ENCODE measurements at regions of chr12 and their contacts with region 1.

Region 1: DNA sequence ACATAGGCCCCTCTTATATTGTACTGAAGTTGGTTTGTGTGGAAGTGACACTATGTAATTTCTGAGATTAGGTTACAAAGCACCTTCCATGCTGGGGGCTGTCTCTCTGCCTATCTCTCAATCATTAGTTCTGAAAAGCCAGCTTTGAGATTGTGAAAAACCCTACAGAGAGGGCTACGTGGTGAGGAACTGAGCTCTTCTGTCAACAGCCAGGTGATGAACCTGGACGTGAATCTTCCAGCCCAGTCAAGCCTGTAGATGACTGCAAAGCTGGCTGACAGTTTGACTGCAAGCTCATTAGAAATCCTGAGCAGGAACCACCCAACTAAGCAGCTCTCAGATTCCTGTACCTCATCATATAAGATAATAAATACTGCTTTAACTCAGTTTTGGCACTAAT is 36.3 kb upstream of the BBS10 start:
- DNase-seq: no peak
- ATAC-seq: no peak
- H3K4me3 ChIP-seq: no peak overlapping the region
- H3K27ac ChIP-seq: no peak overlapping the region
- H3K4me1 ChIP-seq: no peaks in the 10 kb centered on the region
- H3K27me3 ChIP-seq: no peaks in the 10 kb centered on the region
- CTCF ChIP-seq: no peak

Region 2: DNA sequence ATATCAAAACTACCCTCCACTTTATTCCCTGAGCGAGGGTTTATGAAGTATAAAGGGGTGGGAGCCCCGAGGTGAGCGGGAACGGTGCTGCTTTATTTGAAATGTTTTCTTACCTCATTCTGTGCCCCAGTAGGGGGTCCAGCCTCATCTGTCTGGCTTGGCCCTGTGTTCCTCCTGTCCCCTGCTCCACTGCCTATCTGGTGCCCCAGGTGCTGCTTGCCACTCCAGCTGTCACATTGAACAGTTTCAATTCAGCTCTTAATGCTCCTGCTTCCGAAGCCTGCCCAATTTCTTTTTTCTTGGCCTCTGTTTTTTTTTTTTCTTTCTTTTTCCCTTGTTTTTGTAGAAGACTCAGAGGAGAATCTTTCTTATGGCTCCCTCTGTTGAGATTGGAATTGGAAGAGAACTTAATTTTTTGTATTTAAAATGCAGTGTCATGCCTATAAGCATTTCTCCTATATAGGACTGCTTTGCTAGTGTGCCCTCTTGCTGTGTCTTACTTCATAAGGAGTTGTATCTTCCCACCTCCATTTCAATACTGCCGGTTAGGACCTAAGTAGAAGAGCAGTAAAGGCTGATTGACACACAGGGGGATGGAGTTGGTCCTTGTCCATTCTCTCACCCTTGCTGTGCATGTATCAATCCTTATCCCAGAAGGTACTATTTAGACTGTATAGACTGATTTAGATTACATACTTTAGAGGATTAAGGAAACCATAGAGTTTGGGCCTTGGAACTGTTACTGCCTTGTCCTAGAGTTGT is 1844.6 kb before region 1 on chr12:
- intact Hi-C with region 1: loop called in 1 of 10 experiments (anchors 5 kb)
- DNase-seq: no peak
- ATAC-seq: no peak
- H3K4me3 ChIP-seq: peak overlapping the region in 9 of 10 donors; percentile 56 to 93 (median 73)
- H3K27ac ChIP-seq: peak overlapping the region in 6 of 10 donors; percentile 13 to 98 (median 62)
- H3K4me1 ChIP-seq: peaks cover 5 to 47% (median 44%) of the 10 kb centered on the region in 9 donors
- H3K27me3 ChIP-seq: no peaks in the 10 kb centered on the region
- CTCF ChIP-seq: no peak

Region 3: DNA sequence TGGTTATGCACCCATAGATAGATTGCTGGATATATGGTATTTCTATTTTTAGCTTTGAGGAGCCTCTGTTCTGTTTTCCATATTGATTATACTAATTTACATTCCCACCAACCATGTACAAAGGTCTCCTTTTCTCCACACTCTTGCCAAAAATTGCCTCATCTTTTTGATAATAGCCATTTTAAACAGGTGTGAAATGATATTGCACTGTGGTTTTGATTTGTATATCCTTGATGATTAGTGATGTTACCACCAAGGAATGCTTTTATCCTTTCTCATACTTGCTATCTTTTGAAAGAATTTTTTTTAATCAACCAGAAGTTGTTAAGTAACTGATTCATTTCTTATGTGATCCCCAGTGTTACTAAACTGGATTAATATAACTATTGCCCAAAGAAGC is 96.3 kb before region 1 on chr12:
- intact Hi-C with region 1: no loop called
- DNase-seq: no peak
- ATAC-seq: no peak
- H3K4me3 ChIP-seq: no peak overlapping the region
- H3K27ac ChIP-seq: no peak overlapping the region
- H3K4me1 ChIP-seq: no peaks in the 10 kb centered on the region
- H3K27me3 ChIP-seq: no peaks in the 10 kb centered on the region
- CTCF ChIP-seq: no peak

Region 4: GRCh38 chr12:76299536-76300296 is 84.8 kb before region 1 on chr12:
- intact Hi-C with region 1: no loop called
- DNase-seq: no peak
- ATAC-seq: no peak
- H3K4me3 ChIP-seq: no peak overlapping the region
- H3K27ac ChIP-seq: no peak overlapping the region
- H3K4me1 ChIP-seq: no peaks in the 10 kb centered on the region
- H3K27me3 ChIP-seq: no peaks in the 10 kb centered on the region
- CTCF ChIP-seq: no peak

Region 5: GRCh38 chr12:76508178-76508577 is 123.6 kb after region 1 on chr12:
- intact Hi-C with region 1: no loop called
- DNase-seq: no peak
- ATAC-seq: no peak
- H3K4me3 ChIP-seq: no peak overlapping the region
- H3K27ac ChIP-seq: no peak overlapping the region
- H3K4me1 ChIP-seq: peaks cover 0 to 13% (median 0%) of the 10 kb centered on the region in 9 donors
- H3K27me3 ChIP-seq: no peaks in the 10 kb centered on the region
- CTCF ChIP-seq: no peak